Activated CD4-positive, alpha-beta memory T cell treated with anti-CD3 and anti-CD28 coated beads, Interleukin-2, amount 10 ng/mL, durations not matched to agents 7 days and 5 days (primary cell): ENCODE measurements at regions of chr15 and their contacts with region 1.

Region 1: DNA sequence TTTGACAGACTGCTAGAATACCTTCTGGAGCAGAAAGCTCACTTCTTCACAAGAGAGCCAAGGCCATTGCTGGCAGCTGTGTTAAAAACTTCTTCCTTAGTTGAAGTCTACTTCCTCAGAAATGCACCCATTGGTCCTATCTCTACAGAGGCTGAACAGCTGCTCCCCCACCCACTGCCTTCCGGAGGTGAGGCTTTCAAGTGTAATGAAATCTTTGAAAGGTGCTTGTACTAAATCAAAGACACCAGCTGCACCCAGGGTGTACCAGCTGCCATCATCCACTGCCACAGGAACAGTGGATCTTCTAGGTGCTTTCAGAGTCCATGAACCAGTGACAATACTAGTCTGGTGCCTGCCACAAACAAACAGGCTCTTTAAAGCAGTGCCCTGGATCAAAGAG is 26.4 kb upstream of the HERC1 start:
- DNase-seq: peak; percentile 60
- H3K4me3 Mint-ChIP-seq: no peak overlapping the region
- H3K27ac Mint-ChIP-seq: peak overlapping the region; percentile 48
- H3K4me1 Mint-ChIP-seq: peaks cover 17% of the 10 kb centered on the region
- H3K27me3 Mint-ChIP-seq: no peaks in the 10 kb centered on the region

Region 2: GRCh38 chr15:63818191-63818590 is 42.0 kb before region 1 on chr15:
- CTCF ChIA-PET with region 1: no interaction called
- POLR2A ChIA-PET with region 1: no interaction called
- DNase-seq: no peak
- H3K4me3 Mint-ChIP-seq: no peak overlapping the region
- H3K27ac Mint-ChIP-seq: no peak overlapping the region
- H3K4me1 Mint-ChIP-seq: peaks cover 30% of the 10 kb centered on the region
- H3K27me3 Mint-ChIP-seq: no peaks in the 10 kb centered on the region

Region 3: DNA sequence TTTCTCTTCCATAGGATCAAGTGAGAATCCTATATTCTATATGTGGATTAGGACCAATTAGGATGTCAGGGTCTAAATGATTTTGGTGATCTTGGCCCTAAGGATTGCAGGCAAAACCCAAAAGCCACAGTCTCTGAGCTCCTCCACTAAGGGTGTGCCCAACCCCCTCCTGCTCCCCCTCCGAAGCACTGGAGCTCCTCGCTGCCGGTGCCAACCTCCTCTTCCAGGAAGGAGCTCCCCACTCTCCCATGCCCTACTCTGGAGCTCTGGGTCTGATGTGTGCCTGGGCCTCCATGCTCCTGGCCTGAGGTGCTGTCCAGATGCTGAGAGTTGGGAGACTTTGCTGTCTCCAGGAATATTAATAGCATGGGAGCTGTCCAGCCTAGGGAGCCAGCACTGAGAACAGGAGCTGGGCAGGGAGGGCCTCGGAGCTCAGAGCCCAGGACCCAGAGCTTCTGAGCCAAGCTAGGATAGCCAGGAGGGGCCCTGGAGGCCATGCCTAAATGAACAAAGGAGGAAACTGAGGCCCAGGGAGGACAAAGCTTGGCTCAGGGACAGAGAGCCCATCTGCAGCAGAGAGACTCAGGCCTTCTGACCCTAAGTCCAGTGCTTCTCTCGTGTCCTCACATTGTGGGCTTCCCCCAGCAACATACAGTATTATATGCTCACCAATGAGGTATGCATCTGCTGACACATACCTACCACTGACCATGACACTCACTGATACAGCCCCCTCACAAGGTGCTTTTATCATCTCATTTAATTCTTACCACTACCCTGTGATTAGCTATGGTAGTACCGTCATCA is 10.5 kb after region 1 on chr15:
- CTCF ChIA-PET with region 1: interaction called, 3 read pairs
- POLR2A ChIA-PET with region 1: interaction called, 10 read pairs
- DNase-seq: no peak
- H3K4me3 Mint-ChIP-seq: no peak overlapping the region
- H3K27ac Mint-ChIP-seq: no peak overlapping the region
- H3K4me1 Mint-ChIP-seq: peaks cover 5% of the 10 kb centered on the region
- H3K27me3 Mint-ChIP-seq: no peaks in the 10 kb centered on the region